AG04450 (cell line): ENCODE measurements at regions of chr2 and their contacts with region 1.

Region 1: GRCh38 chr2:118492335-118492734 is 355.1 kb downstream of the EN1 start:
- DNase-seq: no peak
- H3K4me3 ChIP-seq: no peak overlapping the region
- H3K27ac ChIP-seq: no peak overlapping the region
- H3K27me3 ChIP-seq: no peaks in the 10 kb centered on the region
- CTCF ChIP-seq: peak; percentile 52

Region 2: DNA sequence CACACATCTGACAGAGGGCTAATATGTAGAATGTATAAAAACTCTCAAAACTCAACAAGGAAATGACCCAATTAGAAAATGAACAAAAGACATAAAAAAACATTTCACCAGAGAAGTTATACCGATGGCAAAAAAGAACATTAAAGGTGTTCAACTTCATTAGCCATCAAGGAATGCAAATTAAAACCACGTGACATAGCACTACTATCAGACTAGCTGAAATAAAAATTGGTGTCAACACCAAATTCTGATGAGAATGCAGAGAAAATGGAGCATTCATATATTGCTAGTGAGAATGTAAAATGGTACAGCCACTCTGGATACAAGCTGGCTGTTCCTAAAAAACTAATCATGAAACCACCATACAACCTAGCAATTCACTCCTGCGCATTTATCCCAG is 276.1 kb before region 1 on chr2:
- CTCF ChIA-PET with region 1: no interaction called
- POLR2A ChIA-PET with region 1: no interaction called
- DNase-seq: no peak
- H3K4me3 ChIP-seq: no peak overlapping the region
- H3K27ac ChIP-seq: no peak overlapping the region
- H3K27me3 ChIP-seq: no peaks in the 10 kb centered on the region
- CTCF ChIP-seq: no peak

Region 3: GRCh38 chr2:118473846-118474540 is 18.3 kb before region 1 on chr2:
- CTCF ChIA-PET with region 1: interaction called, 13 read pairs
- POLR2A ChIA-PET with region 1: no interaction called
- DNase-seq: no peak
- H3K4me3 ChIP-seq: no peak overlapping the region
- H3K27ac ChIP-seq: no peak overlapping the region
- H3K27me3 ChIP-seq: peaks cover 3% of the 10 kb centered on the region
- CTCF ChIP-seq: no peak

Region 4: DNA sequence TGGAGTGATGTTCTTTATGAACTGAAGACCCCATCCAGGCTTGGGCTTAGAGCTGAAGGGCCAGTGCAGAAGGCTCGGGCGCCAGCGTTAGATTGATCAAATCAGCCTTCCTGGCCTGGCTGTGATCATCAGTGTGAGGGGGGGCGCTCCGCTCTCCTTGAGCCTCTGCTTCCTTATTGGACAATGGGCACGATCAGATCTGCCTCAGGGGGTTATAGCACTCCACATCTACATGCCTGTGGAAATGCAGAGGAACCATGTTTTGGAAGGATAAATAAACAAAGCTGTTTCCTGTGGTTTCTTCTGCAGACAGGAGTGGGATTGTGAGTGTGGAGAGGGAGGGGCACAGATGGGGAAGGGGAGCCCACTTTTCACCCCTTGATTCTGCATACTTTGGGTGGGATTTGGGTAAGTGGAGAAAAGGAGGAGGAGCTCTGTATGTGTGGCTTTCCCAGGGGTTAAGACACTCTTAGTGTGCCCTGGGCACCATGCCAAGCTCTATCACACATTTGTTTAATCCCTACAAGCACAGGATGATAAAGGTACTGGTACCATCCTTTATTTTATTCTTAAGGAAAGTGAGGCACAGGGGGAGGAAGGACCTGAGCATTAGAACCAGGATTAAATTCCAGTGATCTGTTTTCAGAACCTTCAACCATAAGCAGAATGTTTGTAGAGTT is 204.6 kb after region 1 on chr2:
- CTCF ChIA-PET with region 1: no interaction called
- POLR2A ChIA-PET with region 1: no interaction called
- DNase-seq: no peak
- H3K4me3 ChIP-seq: no peak overlapping the region
- H3K27ac ChIP-seq: no peak overlapping the region
- H3K27me3 ChIP-seq: peaks cover 2% of the 10 kb centered on the region
- CTCF ChIP-seq: no peak